Psoas muscle (tissue), 8 donors: ENCODE measurements at regions of chr4 and their contacts with region 1.

Region 1: GRCh38 chr4:146342600-146343192 is 128.4 kb downstream of the REELD1 start:
- DNase-seq: no peak
- ATAC-seq: peak in 1 of 4 donors; percentile 65
- H3K4me3 ChIP-seq: no peak overlapping the region
- H3K27ac ChIP-seq: no peak overlapping the region
- H3K4me1 ChIP-seq: no peaks in the 10 kb centered on the region
- H3K27me3 ChIP-seq: no peaks in the 10 kb centered on the region
- CTCF ChIP-seq: peak; percentile 71

Region 2: GRCh38 chr4:146522098-146522868 is 179.6 kb after region 1 on chr4:
- intact Hi-C with region 1: loop called in 1 of 2 experiments (anchors 10 kb)
- DNase-seq: peak; percentile 92 to 94
- ATAC-seq: peak; percentile 97 to 98 (median 98)
- H3K4me3 ChIP-seq: peak overlapping the region; percentile 90
- H3K27ac ChIP-seq: peak overlapping the region; percentile 82
- H3K4me1 ChIP-seq: peaks cover 24% of the 10 kb centered on the region
- H3K27me3 ChIP-seq: no peaks in the 10 kb centered on the region
- CTCF ChIP-seq: no peak

Region 3: DNA sequence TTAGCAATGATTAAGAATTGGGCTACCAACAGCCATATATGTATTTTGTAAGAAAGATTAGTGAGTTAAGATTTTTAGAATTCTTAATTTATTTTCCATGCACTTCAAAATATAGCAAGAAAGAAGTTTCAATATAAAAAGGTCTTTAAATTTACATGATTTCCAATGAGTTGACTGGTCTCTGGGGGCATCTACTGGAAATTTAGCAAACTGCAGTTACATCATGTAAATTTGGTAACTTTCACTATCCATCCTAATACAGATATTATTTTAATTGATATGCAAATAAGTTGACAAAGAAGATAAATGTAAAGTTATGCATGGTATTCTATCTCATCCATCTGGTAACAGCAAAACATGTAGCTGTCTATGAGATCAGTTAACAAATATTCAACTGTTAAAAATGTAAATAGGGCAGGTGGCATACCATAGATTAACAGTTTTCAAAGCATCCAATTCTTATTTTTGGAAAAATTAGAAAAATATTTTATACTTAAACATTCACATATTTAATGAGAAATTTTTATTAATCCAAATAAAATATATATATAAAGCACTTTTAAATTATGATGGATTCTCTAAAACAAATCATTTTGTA is 573.9 kb after region 1 on chr4:
- intact Hi-C with region 1: loop called (anchors 5 to 10 kb)
- DNase-seq: no peak
- ATAC-seq: no peak
- H3K4me3 ChIP-seq: no peak overlapping the region
- H3K27ac ChIP-seq: no peak overlapping the region
- H3K4me1 ChIP-seq: no peaks in the 10 kb centered on the region
- H3K27me3 ChIP-seq: no peaks in the 10 kb centered on the region
- CTCF ChIP-seq: peak; percentile 73

Region 4: DNA sequence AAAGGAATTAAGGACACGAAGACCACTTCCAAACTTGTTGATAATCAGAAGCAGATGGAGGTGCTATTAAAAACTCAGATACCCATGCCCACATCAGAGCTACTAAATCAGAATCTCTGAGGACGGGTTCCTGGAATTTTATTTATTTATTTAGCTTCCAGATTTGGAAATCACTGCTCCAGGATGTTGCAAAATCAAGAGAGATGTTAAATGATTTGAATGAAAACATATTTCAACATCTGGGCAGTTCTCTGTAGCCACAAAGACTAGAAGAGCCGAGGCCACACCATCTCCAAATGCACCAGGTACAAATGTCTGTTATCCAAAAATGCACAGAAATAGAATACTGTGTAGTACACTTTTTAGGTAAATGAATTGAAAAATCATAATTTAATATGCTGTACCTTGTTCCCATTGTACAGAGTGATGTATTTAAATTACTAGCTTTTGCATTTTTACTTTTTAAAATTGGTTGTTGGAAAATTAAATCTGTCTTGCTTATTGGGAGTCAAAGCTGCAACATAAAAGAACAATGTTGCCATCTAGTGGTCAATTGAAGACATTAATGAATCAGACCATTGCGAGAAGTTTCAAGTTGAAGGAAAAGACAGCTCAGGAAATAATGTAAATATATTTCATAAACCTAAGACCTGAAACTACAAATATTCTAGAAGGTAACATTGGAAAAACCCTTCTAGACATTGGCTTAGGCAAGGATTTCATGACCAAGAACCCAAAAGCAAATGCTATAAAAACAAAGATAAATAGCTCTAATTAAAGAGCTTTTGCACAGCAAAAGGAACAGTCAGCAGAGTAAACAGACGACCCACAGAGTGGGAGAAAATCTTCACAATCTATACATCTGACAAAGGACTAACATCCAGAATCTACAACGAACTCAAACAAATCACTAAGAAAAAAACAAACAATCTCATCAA is 754.2 kb after region 1 on chr4:
- intact Hi-C with region 1: loop called (anchors 2 to 5 kb)
- DNase-seq: no peak
- ATAC-seq: peak in 3 of 4 donors; percentile 40 to 77 (median 44)
- H3K4me3 ChIP-seq: no peak overlapping the region
- H3K27ac ChIP-seq: no peak overlapping the region
- H3K4me1 ChIP-seq: no peaks in the 10 kb centered on the region
- H3K27me3 ChIP-seq: no peaks in the 10 kb centered on the region
- CTCF ChIP-seq: peak; percentile 71

Region 5: GRCh38 chr4:147381749-147382148 is 1039.1 kb after region 1 on chr4:
- intact Hi-C with region 1: loop called in 1 of 2 experiments (anchors 5 kb)
- DNase-seq: no peak
- ATAC-seq: no peak
- H3K4me3 ChIP-seq: no peak overlapping the region
- H3K27ac ChIP-seq: no peak overlapping the region
- H3K4me1 ChIP-seq: no peaks in the 10 kb centered on the region
- H3K27me3 ChIP-seq: no peaks in the 10 kb centered on the region
- CTCF ChIP-seq: no peak